MCF 10A (cell line): ENCODE measurements at regions of chr10 and their contacts with region 1.

Region 1: DNA sequence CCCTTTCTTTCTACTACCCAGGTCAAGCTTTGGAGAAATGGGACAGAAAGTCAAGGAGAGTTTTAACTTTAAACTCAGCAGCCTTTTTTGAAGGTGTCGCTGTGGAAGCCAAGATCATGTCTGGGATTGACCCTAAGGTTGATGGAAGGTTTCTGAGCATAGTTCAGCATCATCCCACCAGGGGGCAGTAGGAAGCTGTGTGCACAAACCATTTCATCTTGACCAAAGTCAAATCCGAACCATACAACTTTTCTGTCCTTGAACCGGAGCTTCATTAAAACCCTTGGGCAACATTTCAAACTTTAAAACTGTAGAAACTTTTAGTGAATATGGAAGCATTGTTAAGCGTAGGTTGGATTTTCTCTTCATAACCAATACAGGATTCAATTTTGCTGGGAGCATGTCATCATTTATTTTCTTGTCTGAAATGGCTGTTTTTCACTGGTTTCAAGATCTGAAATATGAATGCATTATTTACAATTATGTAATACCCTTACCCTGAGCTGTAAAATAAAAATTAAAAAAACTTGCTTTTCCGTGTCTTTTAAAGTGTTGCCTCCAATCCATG is 214.4 kb upstream of the KIAA1217 start:
- DNase-seq: peak; percentile 75
- H3K4me3 Mint-ChIP-seq: no peak overlapping the region
- H3K27ac Mint-ChIP-seq: no peak overlapping the region
- H3K4me1 Mint-ChIP-seq: no peaks in the 10 kb centered on the region
- H3K27me3 Mint-ChIP-seq: peaks cover 33% of the 10 kb centered on the region
- CTCF ChIP-seq: peak; percentile 80

Region 2: DNA sequence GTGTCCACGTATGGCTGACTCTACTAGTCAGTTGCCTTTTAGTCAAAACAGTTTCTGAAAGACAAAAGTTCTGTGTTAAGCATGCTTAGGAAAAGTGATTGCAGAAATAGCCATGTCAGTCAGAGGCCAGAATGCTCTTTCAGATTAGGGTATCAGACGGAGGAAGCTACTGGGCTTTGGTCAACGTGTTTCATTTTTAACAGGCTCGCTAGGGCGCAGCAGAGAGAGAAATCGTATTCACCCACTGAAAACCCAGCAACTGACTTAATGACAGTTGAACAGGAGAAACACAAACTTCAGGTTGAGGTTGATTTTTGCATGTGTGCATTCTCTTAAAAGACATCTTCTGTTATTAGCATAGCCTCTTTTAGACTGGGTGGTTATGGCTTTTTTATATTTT is 108.2 kb before region 1 on chr10:
- CTCF ChIA-PET with region 1: no interaction called
- POLR2A ChIA-PET with region 1: no interaction called
- intact Hi-C with region 1: no loop called
- DNase-seq: peak; percentile 5
- H3K4me3 Mint-ChIP-seq: no peak overlapping the region
- H3K27ac Mint-ChIP-seq: no peak overlapping the region
- H3K4me1 Mint-ChIP-seq: no peaks in the 10 kb centered on the region
- H3K27me3 Mint-ChIP-seq: peaks cover 57% of the 10 kb centered on the region
- CTCF ChIP-seq: no peak

Region 3: GRCh38 chr10:24008164-24009091 is 13.9 kb after region 1 on chr10:
- CTCF ChIA-PET with region 1: interaction called, 25 read pairs
- POLR2A ChIA-PET with region 1: no interaction called
- intact Hi-C with region 1: no loop called
- DNase-seq: peak; percentile 13
- H3K4me3 Mint-ChIP-seq: no peak overlapping the region
- H3K27ac Mint-ChIP-seq: no peak overlapping the region
- H3K4me1 Mint-ChIP-seq: peaks cover 6% of the 10 kb centered on the region
- H3K27me3 Mint-ChIP-seq: peaks cover 76% of the 10 kb centered on the region
- CTCF ChIP-seq: no peak

Region 4: GRCh38 chr10:24193330-24193729 is 198.8 kb after region 1 on chr10:
- CTCF ChIA-PET with region 1: interaction called, 97 read pairs
- POLR2A ChIA-PET with region 1: no interaction called
- intact Hi-C with region 1: loop called (anchors 1 kb)
- DNase-seq: no peak
- H3K4me3 Mint-ChIP-seq: no peak overlapping the region
- H3K27ac Mint-ChIP-seq: no peak overlapping the region
- H3K4me1 Mint-ChIP-seq: no peaks in the 10 kb centered on the region
- H3K27me3 Mint-ChIP-seq: peaks cover 17% of the 10 kb centered on the region
- CTCF ChIP-seq: no peak

Region 5: GRCh38 chr10:24360282-24361127 is 365.9 kb after region 1 on chr10:
- CTCF ChIA-PET with region 1: interaction called, 108 read pairs
- POLR2A ChIA-PET with region 1: interaction called, 5 read pairs
- intact Hi-C with region 1: loop called (anchors 1 kb)
- DNase-seq: peak; percentile 87
- H3K4me3 Mint-ChIP-seq: no peak overlapping the region
- H3K27ac Mint-ChIP-seq: no peak overlapping the region
- H3K4me1 Mint-ChIP-seq: peaks cover 6% of the 10 kb centered on the region
- H3K27me3 Mint-ChIP-seq: no peaks in the 10 kb centered on the region
- CTCF ChIP-seq: peak; percentile 71

Region 6: GRCh38 chr10:24503461-24504320 is 509.1 kb after region 1 on chr10:
- CTCF ChIA-PET with region 1: interaction called, 28 read pairs
- POLR2A ChIA-PET with region 1: no interaction called
- intact Hi-C with region 1: loop called (anchors 5 kb)
- DNase-seq: peak; percentile 81
- H3K4me3 Mint-ChIP-seq: no peak overlapping the region
- H3K27ac Mint-ChIP-seq: peak overlapping the region; percentile 23
- H3K4me1 Mint-ChIP-seq: no peaks in the 10 kb centered on the region
- H3K27me3 Mint-ChIP-seq: no peaks in the 10 kb centered on the region
- CTCF ChIP-seq: peak; percentile 86